PC-9 (cell line): ENCODE measurements at regions of chr4 and their contacts with region 1.

Region 1: DNA sequence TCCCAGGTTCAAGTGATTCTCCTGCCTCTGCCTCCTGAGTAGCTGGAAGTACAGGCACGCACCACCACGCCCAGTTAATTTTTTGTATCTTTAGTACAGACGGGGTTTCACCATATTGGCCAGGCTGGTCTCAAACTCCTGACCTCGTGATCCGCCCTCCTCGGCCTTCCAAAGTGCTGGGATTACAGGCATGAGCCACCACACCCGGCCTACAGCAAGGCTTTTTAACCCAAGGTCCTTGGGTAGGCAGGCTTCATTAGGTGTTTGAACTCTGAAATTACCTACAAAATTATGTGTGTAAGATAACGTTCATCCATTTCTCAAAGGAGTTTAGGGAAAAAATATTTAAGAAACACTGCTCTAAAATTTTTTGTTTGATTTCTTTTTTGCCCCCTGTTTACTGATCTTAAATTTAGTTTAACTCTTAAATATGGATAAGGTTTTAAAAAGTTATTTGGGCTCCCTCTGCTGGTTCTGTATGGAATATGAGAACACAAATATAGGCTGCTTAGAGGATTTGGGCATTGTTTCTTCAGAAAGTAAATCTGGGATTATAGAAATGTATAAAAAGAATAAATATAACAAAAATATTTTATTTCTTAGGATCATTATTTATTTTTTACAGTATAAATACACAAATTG is 92.8 kb downstream of the CBR4 start:
- DNase-seq: no peak
- H3K4me3 ChIP-seq: no peak overlapping the region
- H3K27ac ChIP-seq: no peak overlapping the region
- H3K4me1 ChIP-seq: no peaks in the 10 kb centered on the region
- H3K27me3 ChIP-seq: no peaks in the 10 kb centered on the region
- CTCF ChIP-seq: peak; percentile 80

Region 2: GRCh38 chr4:168710353-168710946 is 206.8 kb before region 1 on chr4:
- CTCF ChIA-PET with region 1: no interaction called
- POLR2A ChIA-PET with region 1: no interaction called
- intact Hi-C with region 1: loop called (anchors 5 kb)
- DNase-seq: peak in 1 of 2 experiments; percentile 15
- H3K4me3 ChIP-seq: no peak overlapping the region
- H3K27ac ChIP-seq: no peak overlapping the region
- H3K4me1 ChIP-seq: no peaks in the 10 kb centered on the region
- H3K27me3 ChIP-seq: no peaks in the 10 kb centered on the region
- CTCF ChIP-seq: peak; percentile 45

Region 3: DNA sequence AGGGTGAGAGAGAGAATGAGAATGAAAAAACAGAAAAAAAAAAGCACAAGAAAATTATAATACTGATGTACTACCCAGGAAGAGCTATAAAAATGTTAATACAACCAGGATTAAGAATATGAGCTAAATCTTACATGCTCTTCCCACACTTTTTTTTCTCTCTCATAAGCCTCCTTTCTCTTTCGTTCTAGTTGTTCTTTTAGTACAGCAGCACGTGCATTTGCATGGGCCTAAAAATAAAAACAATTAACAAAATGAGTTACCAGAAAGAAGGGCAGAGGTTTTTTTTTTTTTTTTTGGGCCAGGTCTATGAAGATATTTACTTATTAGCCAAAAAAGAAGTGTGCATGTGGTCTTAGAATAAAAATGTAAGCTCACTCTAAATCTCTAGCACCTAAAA is 589.6 kb after region 1 on chr4:
- CTCF ChIA-PET with region 1: interaction called, 15 read pairs
- POLR2A ChIA-PET with region 1: no interaction called
- intact Hi-C with region 1: no loop called
- DNase-seq: no peak
- H3K4me3 ChIP-seq: no peak overlapping the region
- H3K27ac ChIP-seq: no peak overlapping the region
- H3K4me1 ChIP-seq: no peaks in the 10 kb centered on the region
- H3K27me3 ChIP-seq: no peaks in the 10 kb centered on the region
- CTCF ChIP-seq: no peak